SK-N-SH (cell line): ENCODE measurements at regions of chr5 and their contacts with region 1.

Region 1: GRCh38 chr5:36264202-36264760 is 22.6 kb upstream of the NADK2 start:
- DNase-seq: no peak
- H3K4me3 ChIP-seq: no peak overlapping the region
- H3K27ac ChIP-seq: no peak overlapping the region
- H3K4me1 ChIP-seq: peaks cover 0 to 2% of the 10 kb centered on the region in 2 experiments; a peak in 1 of 4 replicates
- H3K27me3 ChIP-seq: no peaks in the 10 kb centered on the region
- CTCF ChIP-seq: no peak
- EP300 ChIP-seq: no peak
- RAD21 ChIP-seq: no peak

Region 2: GRCh38 chr5:35762368-35762767 is 501.9 kb before region 1 on chr5:
- CTCF ChIA-PET with region 1: no interaction called
- POLR2A ChIA-PET with region 1: no interaction called
- DNase-seq: no peak
- H3K4me3 ChIP-seq: no peak overlapping the region
- H3K27ac ChIP-seq: no peak overlapping the region
- H3K4me1 ChIP-seq: no peaks in the 10 kb centered on the region
- H3K27me3 ChIP-seq: no peaks in the 10 kb centered on the region
- CTCF ChIP-seq: no peak
- EP300 ChIP-seq: no peak
- RAD21 ChIP-seq: no peak

Region 3: DNA sequence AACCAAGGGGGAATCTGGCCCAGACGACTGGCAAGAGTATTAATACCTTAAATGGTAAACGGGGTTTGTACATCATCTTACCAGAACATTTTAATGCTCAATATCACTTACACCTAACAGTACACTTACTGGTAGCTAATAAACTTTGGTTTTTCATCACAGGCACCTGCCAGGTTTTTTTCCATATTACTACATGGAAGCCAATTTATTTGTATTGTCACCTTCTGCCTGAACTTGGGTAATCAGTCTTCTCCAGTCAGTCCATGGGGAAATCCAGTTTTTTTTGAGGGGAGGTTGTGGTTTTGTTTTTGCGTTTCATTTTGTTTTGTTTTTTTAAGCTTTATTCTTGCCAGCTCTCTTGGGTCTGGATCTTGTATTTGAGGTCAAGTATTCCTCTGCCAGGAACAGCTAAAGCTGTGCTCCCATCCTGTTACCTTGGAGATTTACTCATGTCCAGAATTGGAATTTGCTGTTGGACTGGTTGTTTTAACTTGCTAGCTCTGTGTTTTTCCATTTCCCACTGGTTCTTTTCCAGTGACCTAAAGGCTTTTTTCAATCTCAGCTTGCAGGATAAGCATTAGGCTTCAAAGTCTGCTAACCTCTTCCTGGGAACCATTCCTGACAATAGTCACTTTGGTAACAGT is 11.4 kb before region 1 on chr5:
- CTCF ChIA-PET with region 1: interaction called, 24 read pairs
- POLR2A ChIA-PET with region 1: no interaction called
- DNase-seq: no peak
- H3K4me3 ChIP-seq: no peak overlapping the region
- H3K27ac ChIP-seq: no peak overlapping the region
- H3K4me1 ChIP-seq: no peaks in the 10 kb centered on the region
- H3K27me3 ChIP-seq: no peaks in the 10 kb centered on the region
- CTCF ChIP-seq: no peak
- EP300 ChIP-seq: no peak
- RAD21 ChIP-seq: no peak

Region 4: GRCh38 chr5:36305571-36306326 is 41.5 kb after region 1 on chr5:
- CTCF ChIA-PET with region 1: interaction called, 41 read pairs
- POLR2A ChIA-PET with region 1: no interaction called
- DNase-seq: peak; percentile 42
- H3K4me3 ChIP-seq: no peak overlapping the region
- H3K27ac ChIP-seq: no peak overlapping the region
- H3K4me1 ChIP-seq: no peaks in the 10 kb centered on the region; a peak in 2 of 4 replicates
- H3K27me3 ChIP-seq: no peaks in the 10 kb centered on the region; the same call in 1 of the 2 replicates
- CTCF ChIP-seq: peak; percentile 83
- EP300 ChIP-seq: no peak
- RAD21 ChIP-seq: peak; percentile 91